Natural killer cell (primary cell): ENCODE measurements at regions of chr4 and their contacts with region 1.

Region 1: DNA sequence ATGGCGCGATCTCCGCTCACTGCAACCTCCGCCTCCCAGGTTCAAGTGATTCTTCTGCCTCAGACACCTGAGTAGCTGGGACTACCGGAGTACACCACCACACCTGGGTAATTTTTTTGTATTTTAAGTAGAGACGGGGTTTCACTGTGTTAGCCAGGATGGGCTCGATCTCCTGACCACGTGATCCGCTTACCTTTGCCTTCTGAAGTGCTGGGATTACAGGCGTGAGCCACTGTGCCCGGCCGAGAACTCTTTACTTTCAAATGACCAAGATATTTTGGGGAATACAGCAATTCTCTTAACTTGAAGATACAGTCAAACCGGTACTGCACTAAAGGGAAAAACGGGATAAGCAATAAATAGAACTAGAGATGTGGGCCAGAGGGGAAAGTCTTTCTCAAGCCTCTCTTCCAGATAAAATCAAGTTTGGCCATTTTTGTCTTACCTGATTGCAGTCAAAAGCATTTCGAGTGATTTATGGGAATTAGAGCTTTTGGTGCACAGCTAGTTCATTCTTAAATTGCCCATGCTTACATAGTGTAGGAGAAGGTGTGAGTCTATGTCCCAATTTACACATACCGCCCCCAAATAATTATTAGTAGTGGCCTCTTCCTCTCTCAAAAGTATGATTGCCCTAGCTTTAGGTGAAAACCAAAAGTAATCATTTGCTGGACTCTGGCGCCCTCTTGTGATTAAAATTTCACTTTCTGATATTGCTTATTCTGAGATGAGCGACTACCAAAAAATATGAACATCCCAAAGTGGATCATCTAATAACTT is 53.2 kb upstream of the ABCG2 start:
- DNase-seq: peak in 1 of 2 donors; percentile 76
- ATAC-seq: peak; percentile 64 to 68 (median 67)
- H3K4me3 ChIP-seq: no peak overlapping the region
- H3K4me3 Mint-ChIP-seq: no peak overlapping the region
- H3K27ac ChIP-seq: no peak overlapping the region
- H3K27ac Mint-ChIP-seq: no peak overlapping the region
- H3K4me1 ChIP-seq: no peaks in the 10 kb centered on the region
- H3K4me1 Mint-ChIP-seq: peaks cover 0 to 4% of the 10 kb centered on the region in 2 donors
- H3K27me3 ChIP-seq: no peaks in the 10 kb centered on the region
- H3K27me3 Mint-ChIP-seq: peaks cover 6 to 10% of the 10 kb centered on the region in 2 donors
- CTCF ChIP-seq: peak; percentile 75

Region 2: GRCh38 chr4:87679449-87680169 is 532.1 kb before region 1 on chr4:
- intact Hi-C with region 1: loop called (anchors 1 kb)
- DNase-seq: peak in 1 of 2 donors; percentile 62
- ATAC-seq: peak in 1 of 3 donors; percentile 37
- H3K4me3 ChIP-seq: no peak overlapping the region
- H3K4me3 Mint-ChIP-seq: no peak overlapping the region
- H3K27ac ChIP-seq: no peak overlapping the region
- H3K27ac Mint-ChIP-seq: no peak overlapping the region
- H3K4me1 ChIP-seq: no peaks in the 10 kb centered on the region
- H3K4me1 Mint-ChIP-seq: no peaks in the 10 kb centered on the region
- H3K27me3 ChIP-seq: no peaks in the 10 kb centered on the region
- H3K27me3 Mint-ChIP-seq: no peaks in the 10 kb centered on the region
- CTCF ChIP-seq: peak; percentile 72

Region 3: GRCh38 chr4:88033309-88033708 is 178.4 kb before region 1 on chr4:
- intact Hi-C with region 1: loop called (anchors 1 kb)
- DNase-seq: peak in 1 of 2 donors; percentile 74
- ATAC-seq: peak; percentile 61 to 71 (median 67)
- H3K4me3 ChIP-seq: no peak overlapping the region
- H3K4me3 Mint-ChIP-seq: no peak overlapping the region
- H3K27ac ChIP-seq: no peak overlapping the region
- H3K27ac Mint-ChIP-seq: no peak overlapping the region
- H3K4me1 ChIP-seq: no peaks in the 10 kb centered on the region
- H3K4me1 Mint-ChIP-seq: peaks cover 0 to 12% of the 10 kb centered on the region in 2 donors
- H3K27me3 ChIP-seq: no peaks in the 10 kb centered on the region
- H3K27me3 Mint-ChIP-seq: no peaks in the 10 kb centered on the region
- CTCF ChIP-seq: peak; percentile 63

Region 4: DNA sequence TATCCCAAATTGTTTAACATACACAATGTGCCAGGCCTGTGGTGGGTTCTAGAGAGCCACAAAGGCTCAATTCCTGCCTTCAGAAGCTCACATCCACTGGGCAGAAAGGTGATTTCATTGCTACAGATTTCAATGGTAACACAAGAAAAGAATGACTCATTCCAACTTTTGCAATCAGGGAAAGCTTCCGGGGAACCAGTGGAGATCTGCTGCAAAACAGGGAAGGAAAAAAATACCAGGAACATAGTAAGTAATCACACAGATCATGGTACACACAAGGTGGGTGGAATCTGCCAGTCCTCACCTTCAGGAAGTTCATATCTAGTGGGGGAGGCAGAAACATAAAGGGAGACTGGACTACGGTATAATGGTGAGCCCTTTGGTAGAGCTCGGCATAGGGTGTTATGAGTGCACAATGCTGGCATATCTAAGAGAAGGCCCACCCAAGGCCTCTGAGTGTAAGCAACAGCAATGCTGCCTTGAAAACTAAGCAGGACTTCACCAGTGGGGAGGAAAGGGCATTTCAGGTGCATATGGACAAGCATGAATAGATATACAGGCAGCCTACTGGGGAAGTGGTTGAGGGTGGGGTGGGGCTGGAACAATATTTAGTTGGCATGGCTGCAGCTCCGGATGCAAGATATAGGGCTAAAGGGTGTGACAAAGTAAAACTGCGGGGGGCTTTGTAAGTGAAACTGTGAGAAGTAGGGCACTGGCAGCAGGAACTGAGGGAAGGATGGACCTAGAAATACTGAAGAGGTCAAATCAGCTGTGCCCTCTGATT is 1071.8 kb after region 1 on chr4:
- intact Hi-C with region 1: no loop called
- DNase-seq: peak in 1 of 2 donors; percentile 78
- ATAC-seq: peak; percentile 65 to 86 (median 84)
- H3K4me3 ChIP-seq: peak overlapping the region; percentile 12
- H3K4me3 Mint-ChIP-seq: peak overlapping the region; percentile 71
- H3K27ac ChIP-seq: peak overlapping the region; percentile 88
- H3K27ac Mint-ChIP-seq: no peak overlapping the region
- H3K4me1 ChIP-seq: peaks cover 49% of the 10 kb centered on the region
- H3K4me1 Mint-ChIP-seq: peaks cover 56 to 60% of the 10 kb centered on the region in 2 donors
- H3K27me3 ChIP-seq: no peaks in the 10 kb centered on the region
- H3K27me3 Mint-ChIP-seq: no peaks in the 10 kb centered on the region
- CTCF ChIP-seq: no peak

Region 5: GRCh38 chr4:89294573-89295269 is 1083.1 kb after region 1 on chr4:
- intact Hi-C with region 1: no loop called
- DNase-seq: peak in 1 of 2 donors; percentile 83
- ATAC-seq: peak; percentile 68 to 85 (median 82)
- H3K4me3 ChIP-seq: no peak overlapping the region
- H3K4me3 Mint-ChIP-seq: peak overlapping the region; percentile 87
- H3K27ac ChIP-seq: peak overlapping the region; percentile 88
- H3K27ac Mint-ChIP-seq: peak overlapping the region in 1 of 2 donors; percentile 96
- H3K4me1 ChIP-seq: peaks cover 47% of the 10 kb centered on the region
- H3K4me1 Mint-ChIP-seq: peaks cover 88 to 89% of the 10 kb centered on the region in 2 donors
- H3K27me3 ChIP-seq: no peaks in the 10 kb centered on the region
- H3K27me3 Mint-ChIP-seq: no peaks in the 10 kb centered on the region
- CTCF ChIP-seq: no peak